Posterior vena cava (tissue), 2 donors: ENCODE measurements at regions of chr6 and their contacts with region 1.

Region 1: DNA sequence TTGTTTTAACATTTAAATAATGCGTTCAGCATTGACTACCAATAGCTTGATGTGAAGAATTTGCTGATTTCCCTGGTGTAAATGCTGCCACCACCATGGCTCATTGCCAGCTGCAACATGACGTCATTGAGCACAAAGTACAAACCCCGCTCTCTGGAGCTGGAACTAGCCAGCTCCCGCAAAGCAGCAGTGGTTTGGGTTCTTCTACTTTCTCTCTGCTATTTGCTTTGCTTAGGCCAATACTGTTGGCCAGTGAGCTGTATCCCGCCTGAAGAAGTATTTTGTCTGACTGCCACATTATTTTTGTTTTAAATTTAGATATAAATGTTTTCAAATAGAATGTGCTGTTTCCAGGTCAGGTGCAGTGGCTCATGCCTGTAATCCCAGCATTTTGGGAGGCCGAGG is 47.4 kb upstream of the KIF13A start:
- DNase-seq: no peak

Region 2: DNA sequence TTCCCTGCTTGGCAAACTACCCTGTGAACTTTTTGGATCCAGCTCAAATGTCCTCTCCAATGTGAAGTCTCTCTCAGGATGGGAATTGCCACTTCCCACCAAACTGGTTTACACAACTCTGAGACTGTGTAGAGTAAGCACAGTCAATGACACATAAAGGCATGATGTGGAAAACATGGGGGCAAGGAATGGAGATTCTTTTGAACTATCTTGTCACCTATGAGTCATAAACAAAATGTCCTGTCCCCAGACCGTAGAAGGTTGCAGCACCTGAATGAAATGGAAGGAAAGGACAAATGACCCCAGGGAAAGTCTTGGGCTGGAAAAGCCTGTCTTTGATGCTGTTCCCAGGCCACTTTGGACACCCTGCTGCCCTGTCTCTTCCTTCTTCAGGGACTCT is 36.3 kb before region 1 on chr6:
- intact Hi-C with region 1: loop called in 1 of 2 experiments (anchors 2 kb)
- DNase-seq: no peak

Region 3: DNA sequence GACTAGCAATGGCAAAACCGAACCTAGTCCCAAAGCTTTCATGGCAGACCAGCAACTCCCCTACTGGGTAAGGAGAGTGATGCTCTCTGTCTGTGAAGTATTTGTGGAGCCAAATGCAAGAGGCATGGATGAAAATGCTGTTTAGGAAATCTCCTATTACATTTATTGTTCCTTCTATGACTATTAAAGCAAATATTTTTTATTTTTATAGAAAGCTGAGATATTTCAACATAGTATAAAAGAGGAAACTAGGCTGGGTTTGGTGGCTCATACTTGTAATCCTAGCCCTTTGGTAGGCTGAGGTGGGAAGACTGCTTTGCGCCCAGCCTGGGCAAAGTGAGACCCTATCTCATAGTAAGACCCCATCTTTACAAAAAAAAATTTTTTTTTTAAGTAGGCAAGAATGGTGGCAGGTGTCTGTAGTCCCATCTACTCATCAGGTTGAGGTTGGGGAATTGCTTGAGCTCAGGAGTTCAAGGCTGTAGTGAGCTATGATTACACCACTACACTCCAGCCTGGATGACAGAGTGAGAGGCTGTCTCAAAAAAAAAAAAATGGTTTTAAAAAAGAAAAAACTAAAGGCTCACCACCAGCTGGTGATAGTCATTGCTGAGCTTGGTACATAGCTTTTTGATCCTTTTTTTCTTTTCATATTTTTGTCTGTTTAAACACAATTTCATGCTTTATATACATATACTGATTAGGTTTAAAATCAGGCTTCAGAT is 131.7 kb after region 1 on chr6:
- intact Hi-C with region 1: no loop called
- DNase-seq: no peak